BJ (cell line): ENCODE measurements at regions of chr17 and their contacts with region 1.

Region 1: DNA sequence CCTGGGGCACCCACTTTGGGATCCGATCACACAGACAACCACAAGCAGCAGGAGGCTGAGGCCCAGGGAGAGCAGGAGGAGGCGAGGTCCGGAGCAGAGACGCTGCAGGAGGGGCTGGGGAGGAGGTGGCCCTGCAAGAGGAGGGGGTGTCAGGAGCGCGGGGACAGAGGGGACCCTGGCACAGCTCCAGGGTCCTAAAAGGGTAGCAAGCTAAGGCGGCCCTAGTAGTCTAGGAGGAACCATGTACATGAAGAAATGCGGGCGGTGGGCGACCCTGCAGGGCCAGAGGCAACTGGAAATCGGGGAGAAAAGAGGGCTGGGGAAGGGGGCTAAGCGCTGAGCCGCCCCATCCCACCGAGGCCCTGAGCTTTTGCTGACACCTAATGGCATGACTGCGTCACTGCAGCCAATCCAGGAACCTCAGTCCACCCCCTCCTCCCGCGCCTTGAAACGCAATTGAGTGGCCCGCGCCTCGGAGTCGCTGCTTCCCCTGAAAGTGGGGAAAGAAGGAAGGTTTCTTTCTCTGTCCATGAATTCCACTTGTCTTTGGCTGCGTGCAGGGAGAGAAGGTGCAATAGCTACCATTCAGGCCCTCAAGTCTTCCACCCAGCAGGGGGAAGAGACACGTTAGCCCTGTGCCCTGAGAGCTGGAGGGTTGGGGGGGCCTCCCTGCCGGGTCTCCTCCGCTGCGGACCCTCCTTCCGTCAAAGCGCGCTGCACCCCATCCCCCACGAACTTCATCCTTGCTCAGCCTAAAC is 1.8 kb downstream of the ASGR1 start:
- DNase-seq: no peak
- H3K4me3 ChIP-seq: peak overlapping the region; percentile 54
- H3K27me3 ChIP-seq: no peaks in the 10 kb centered on the region
- CTCF ChIP-seq: peak; percentile 84

Region 2: GRCh38 chr17:7060165-7060891 is 117.0 kb before region 1 on chr17:
- CTCF ChIA-PET with region 1: interaction called, 10 read pairs
- POLR2A ChIA-PET with region 1: no interaction called
- DNase-seq: no peak
- H3K4me3 ChIP-seq: no peak overlapping the region
- H3K27me3 ChIP-seq: peaks cover 4% of the 10 kb centered on the region; the same call in 1 of the 2 replicates
- CTCF ChIP-seq: no peak

Region 3: GRCh38 chr17:7136266-7136877 is 41.0 kb before region 1 on chr17:
- CTCF ChIA-PET with region 1: interaction called, 11 read pairs
- POLR2A ChIA-PET with region 1: no interaction called
- DNase-seq: peak; percentile 1
- H3K4me3 ChIP-seq: no peak overlapping the region
- H3K27me3 ChIP-seq: peaks cover 12% of the 10 kb centered on the region
- CTCF ChIP-seq: peak; percentile 91

Region 4: DNA sequence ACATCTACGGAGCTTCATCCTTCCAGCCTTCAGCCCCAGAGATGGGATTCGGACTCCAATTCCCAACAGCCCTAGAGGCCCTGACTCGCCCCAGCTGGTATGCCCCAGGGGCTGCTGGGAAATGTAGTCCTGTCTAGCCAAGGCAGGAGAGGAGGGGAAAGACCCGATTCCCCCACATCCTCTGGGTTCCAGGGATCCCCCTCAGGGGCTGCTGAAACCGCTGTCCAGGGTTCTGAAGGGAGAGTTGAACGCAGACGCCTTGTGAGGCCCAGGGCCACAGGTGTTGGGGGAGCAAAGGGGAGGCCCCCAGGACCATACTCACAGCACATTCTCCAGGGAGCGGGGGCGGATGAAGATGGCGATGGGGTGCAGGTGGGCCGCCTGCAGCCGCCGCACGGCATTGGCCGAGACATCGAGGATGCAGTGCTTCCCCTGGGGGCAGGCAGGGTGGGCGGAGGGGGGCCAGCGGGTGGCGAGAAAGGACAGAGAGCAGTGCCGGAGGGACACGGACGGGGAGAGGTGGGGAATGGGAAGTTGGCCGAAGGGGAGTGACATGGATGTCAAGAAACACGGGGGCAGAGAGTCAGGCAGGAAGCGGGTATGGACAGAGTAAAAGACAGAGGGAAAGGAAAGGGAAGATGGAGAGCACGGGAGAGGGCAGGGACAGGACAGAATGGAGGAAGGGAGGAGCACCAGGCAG is 14.3 kb after region 1 on chr17:
- CTCF ChIA-PET with region 1: interaction called, 13 read pairs
- POLR2A ChIA-PET with region 1: no interaction called
- DNase-seq: no peak
- H3K4me3 ChIP-seq: no peak overlapping the region
- H3K27me3 ChIP-seq: no peaks in the 10 kb centered on the region
- CTCF ChIP-seq: no peak